ENCODE measurements at regions of chr18 and their contacts with region 1.

Region 1: GRCh38 chr18:2857491-2858131 is 10.8 kb downstream of the EMILIN2 start:
- DNase-seq: peak in 1 of 2 experiments; percentile 57
- H3K4me3 ChIP-seq: no peak overlapping the region
- H3K4me3 Mint-ChIP-seq: no peak overlapping the region
- H3K27ac Mint-ChIP-seq: peak overlapping the region; percentile 65
- H3K4me1 ChIP-seq: peaks cover 54% of the 10 kb centered on the region
- H3K4me1 Mint-ChIP-seq: peaks cover 41% of the 10 kb centered on the region
- H3K27me3 ChIP-seq: no peaks in the 10 kb centered on the region
- H3K27me3 Mint-ChIP-seq: no peaks in the 10 kb centered on the region
- CTCF ChIP-seq: no peak

Region 2: GRCh38 chr18:2826581-2826980 is 31.0 kb before region 1 on chr18:
- CTCF ChIA-PET with region 1: no interaction called
- POLR2A ChIA-PET with region 1: interaction called, 4 read pairs
- intact Hi-C with region 1: loop called (anchors 1 kb)
- DNase-seq: peak in 1 of 2 experiments; percentile 31
- H3K4me3 ChIP-seq: no peak overlapping the region
- H3K4me3 Mint-ChIP-seq: no peak overlapping the region
- H3K27ac Mint-ChIP-seq: no peak overlapping the region
- H3K4me1 ChIP-seq: peaks cover 20% of the 10 kb centered on the region
- H3K4me1 Mint-ChIP-seq: peaks cover 26% of the 10 kb centered on the region
- H3K27me3 ChIP-seq: no peaks in the 10 kb centered on the region
- H3K27me3 Mint-ChIP-seq: no peaks in the 10 kb centered on the region
- CTCF ChIP-seq: no peak

Region 3: DNA sequence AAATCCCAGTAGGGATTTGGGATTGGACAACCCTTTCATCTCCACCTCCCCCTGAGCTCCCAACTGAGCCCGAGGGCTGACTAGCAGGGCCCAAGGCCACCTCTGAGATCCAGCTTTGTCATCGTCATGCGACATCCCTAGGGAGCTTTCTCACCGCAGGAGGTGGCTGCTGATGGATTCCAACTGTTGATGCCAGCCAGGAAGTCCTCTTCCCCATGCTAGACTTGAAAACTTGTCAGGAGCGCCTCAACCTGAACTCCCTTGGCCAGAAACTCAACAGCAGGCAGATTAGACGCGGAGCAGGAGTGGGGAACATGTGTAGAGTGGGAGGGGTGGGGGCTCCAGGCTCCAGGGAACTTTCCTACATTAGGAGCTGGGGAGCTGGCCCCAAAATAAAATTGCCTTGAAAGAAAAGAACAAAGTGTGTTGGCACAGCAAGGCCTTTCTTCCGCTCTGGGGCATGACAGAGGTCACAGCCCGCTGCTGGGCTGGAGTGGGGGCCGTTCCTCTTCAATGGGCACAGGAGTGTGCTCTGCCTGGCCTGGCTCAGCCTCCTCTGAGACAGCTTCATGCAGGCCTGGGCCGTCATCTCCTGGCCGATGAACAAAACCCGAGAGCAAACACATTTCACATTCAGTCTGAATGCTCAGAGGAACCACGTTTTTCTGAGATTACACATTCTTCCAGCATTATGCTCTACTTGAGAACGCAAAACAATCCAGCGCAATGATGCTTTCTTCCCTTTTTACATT is 23.7 kb after region 1 on chr18:
- CTCF ChIA-PET with region 1: no interaction called
- POLR2A ChIA-PET with region 1: no interaction called
- intact Hi-C with region 1: loop called (anchors 2 kb)
- DNase-seq: no peak
- H3K4me3 ChIP-seq: no peak overlapping the region
- H3K4me3 Mint-ChIP-seq: no peak overlapping the region
- H3K27ac Mint-ChIP-seq: no peak overlapping the region
- H3K4me1 ChIP-seq: peaks cover 14% of the 10 kb centered on the region
- H3K4me1 Mint-ChIP-seq: peaks cover 4% of the 10 kb centered on the region
- H3K27me3 ChIP-seq: no peaks in the 10 kb centered on the region
- H3K27me3 Mint-ChIP-seq: no peaks in the 10 kb centered on the region
- CTCF ChIP-seq: no peak

Region 4: DNA sequence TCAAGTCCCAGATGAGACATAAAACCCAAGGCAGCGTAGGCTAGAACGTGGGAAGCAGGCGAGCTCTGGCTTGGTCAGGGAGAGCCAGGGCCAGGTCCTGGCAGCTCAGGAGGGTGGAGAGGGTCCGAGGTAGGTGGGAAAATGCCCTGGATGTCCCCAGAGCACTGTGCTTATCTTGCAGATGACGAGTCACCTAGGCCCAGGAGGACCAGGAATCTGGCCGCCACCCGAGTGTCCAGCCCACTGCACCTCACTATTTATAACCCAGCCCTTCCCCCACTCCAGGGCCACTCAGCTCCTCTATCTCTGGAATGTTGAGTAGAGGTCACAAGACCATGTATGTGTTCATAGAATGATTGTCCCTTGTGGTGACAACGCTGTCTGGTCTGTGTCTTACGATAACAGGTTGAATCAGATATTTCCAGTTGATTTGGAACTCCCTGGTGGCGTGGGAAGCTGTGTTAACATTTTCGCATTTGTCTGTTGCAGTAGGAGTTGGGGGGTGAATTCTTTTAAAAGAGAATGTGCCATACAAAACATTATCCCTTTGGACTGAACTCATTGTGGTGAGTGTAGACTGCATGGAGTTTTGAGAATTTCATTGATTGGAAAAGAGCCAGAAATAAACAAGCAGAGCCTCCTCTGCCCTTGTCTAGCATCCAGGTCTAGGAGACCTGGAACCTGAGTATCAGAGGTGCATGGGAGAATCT is 36.7 kb after region 1 on chr18:
- CTCF ChIA-PET with region 1: interaction called, 3 read pairs
- POLR2A ChIA-PET with region 1: interaction called, 3 read pairs
- intact Hi-C with region 1: loop called (anchors 2 kb)
- DNase-seq: peak; percentile 77 to 86
- H3K4me3 ChIP-seq: no peak overlapping the region
- H3K4me3 Mint-ChIP-seq: peak overlapping the region; percentile 39
- H3K27ac Mint-ChIP-seq: peak overlapping the region; percentile 90
- H3K4me1 ChIP-seq: peaks cover 34% of the 10 kb centered on the region
- H3K4me1 Mint-ChIP-seq: peaks cover 20% of the 10 kb centered on the region
- H3K27me3 ChIP-seq: no peaks in the 10 kb centered on the region
- H3K27me3 Mint-ChIP-seq: no peaks in the 10 kb centered on the region
- CTCF ChIP-seq: no peak

Region 5: GRCh38 chr18:2906704-2907549 is 49.3 kb after region 1 on chr18:
- CTCF ChIA-PET with region 1: no interaction called
- POLR2A ChIA-PET with region 1: interaction called, 12 read pairs
- intact Hi-C with region 1: loop called (anchors 2 kb)
- DNase-seq: peak in 1 of 2 experiments; percentile 73
- H3K4me3 ChIP-seq: peak overlapping the region; percentile 84
- H3K4me3 Mint-ChIP-seq: peak overlapping the region; percentile 81
- H3K27ac Mint-ChIP-seq: no peak overlapping the region
- H3K4me1 ChIP-seq: peaks cover 7% of the 10 kb centered on the region; the same call in 1 of the 2 replicates
- H3K4me1 Mint-ChIP-seq: peaks cover 8% of the 10 kb centered on the region
- H3K27me3 ChIP-seq: no peaks in the 10 kb centered on the region
- H3K27me3 Mint-ChIP-seq: no peaks in the 10 kb centered on the region
- CTCF ChIP-seq: peak in 1 of 2 experiments; percentile 49

Region 6: GRCh38 chr18:3051718-3052410 is 194.3 kb after region 1 on chr18:
- CTCF ChIA-PET with region 1: no interaction called
- POLR2A ChIA-PET with region 1: no interaction called
- intact Hi-C with region 1: no loop called
- DNase-seq: peak; percentile 52 to 71
- H3K4me3 ChIP-seq: no peak overlapping the region
- H3K4me3 Mint-ChIP-seq: peak overlapping the region; percentile 4
- H3K27ac Mint-ChIP-seq: peak overlapping the region; percentile 58
- H3K4me1 ChIP-seq: peaks cover 29% of the 10 kb centered on the region
- H3K4me1 Mint-ChIP-seq: peaks cover 29% of the 10 kb centered on the region
- H3K27me3 ChIP-seq: no peaks in the 10 kb centered on the region
- H3K27me3 Mint-ChIP-seq: no peaks in the 10 kb centered on the region
- CTCF ChIP-seq: no peak

Measured in Caco-2 (cell line).